ENCODE measurements at regions of chr17 and their contacts with region 1.

Region 1: DNA sequence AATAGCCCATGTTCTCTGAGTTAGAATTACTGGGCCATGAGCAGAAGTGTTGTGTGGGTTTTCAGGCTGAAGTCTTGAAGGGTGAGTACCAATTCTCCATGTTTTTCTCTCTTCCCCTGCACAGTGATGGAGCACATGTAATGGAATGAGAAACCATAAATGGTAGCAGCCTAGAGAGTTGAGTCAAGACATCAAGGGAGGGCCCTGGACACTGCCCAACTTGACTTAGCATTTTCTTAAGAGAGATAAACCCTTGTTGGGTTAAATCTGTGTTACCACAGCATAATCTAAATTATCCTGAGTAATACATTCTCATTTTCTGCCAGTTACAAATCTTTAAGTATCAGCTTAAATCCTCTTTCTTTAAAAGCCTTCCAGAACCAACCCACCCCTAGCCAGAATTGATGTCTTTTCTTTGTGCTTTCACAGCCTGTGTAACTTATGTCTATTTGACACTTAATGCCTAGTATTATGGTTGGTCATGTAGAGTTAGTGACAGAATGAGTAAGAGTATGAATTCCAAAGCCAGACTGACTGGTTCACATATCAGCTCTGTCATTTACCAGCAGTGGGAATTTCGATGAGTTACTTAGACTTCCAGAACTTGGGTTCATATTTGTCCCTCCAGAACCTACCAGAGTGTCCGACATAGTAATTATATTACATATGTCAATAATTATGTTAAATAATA is 27.0 kb upstream of the RGS9 start:
- DNase-seq: no peak
- H3K4me3 ChIP-seq: no peak overlapping the region
- CTCF ChIP-seq: no peak

Region 2: DNA sequence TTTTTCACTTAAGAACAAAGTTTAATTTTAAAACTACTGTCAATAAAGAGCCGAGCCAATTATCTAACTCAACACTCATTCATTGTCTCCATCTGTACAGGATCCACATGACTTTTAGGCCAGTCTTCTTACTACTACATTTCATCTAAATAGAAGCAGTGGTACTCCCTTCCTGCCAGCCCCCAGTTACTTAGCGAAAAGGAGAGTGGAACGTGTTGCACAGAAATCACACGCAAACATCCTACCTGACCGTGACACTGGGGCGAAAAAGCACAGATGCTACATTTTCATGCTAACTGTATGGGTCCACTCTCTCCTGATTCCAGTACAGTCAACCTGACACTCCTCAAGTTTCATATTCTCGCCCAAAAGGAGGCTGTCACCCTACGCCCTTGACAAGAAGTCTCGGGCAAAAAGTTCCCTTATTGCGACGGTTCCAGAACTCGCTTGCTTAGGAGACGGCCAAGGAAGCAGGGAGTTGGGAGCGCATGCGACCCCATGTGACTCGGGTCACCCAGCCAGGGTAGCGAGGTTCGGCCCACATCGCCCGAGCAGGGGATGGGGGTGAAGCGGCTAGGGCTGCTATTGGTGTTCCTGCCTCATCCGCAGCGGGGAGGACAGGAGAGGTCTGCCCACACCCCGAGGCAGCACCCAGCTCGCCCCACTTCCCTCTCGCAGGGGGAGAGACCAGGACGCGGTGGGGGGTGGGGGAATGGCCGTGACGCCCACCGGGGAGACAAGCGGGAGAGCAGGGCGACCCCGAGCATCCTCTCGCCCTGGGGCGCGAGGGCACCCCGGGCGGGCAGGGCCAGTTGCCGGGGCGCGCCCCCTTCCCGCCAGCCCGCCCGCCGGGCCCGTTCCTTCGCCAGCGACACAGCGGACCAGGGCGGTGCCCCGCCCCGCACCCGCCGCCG is 54.5 kb before region 1 on chr17:
- in situ Hi-C with region 1: no loop called
- DNase-seq: no peak
- H3K4me3 ChIP-seq: peak overlapping the region; percentile 93
- CTCF ChIP-seq: no peak

Region 3: DNA sequence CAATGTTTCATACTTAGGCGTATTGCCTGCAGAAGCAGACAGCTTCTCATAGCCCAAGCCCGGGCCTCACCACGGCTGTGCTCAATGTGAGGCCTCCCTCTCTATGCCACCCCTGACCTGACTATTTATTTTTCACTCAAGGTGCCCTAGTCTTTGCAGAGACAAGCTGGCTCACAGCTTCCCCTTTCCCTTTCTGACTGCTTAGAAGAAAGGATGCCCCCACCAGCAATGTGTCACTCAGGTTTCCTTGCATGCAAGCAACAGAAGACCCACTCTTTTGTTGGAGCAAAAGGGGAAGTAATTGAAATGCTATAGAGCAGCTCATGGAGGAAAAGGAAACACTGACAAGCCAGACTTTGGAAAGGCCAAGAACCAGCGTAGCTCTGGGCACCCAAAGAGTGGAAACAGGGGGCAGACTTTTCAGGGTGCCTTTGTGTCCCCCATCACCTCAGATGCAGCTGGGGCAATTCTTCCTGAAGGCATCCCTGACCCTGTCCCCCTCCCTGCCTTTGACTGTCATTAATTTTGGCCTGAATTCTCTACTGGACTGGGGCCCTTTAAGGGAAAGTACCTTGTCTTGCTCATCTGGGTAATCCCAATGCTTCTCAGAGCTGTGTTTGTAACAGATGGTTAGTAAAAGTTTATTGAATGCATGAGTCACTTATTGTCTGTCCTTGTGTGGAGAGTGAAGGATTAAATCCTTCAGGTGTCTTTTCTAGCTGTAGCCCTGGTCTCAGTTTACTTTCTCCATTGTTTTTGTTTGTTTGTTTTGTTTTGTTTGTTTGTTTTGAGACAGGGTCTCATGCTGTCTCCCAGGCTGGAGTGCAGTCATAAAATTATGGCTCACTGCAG is 44.9 kb after region 1 on chr17:
- in situ Hi-C with region 1: loop called (anchors 5 kb)
- DNase-seq: no peak
- H3K4me3 ChIP-seq: no peak overlapping the region
- CTCF ChIP-seq: no peak

Region 4: DNA sequence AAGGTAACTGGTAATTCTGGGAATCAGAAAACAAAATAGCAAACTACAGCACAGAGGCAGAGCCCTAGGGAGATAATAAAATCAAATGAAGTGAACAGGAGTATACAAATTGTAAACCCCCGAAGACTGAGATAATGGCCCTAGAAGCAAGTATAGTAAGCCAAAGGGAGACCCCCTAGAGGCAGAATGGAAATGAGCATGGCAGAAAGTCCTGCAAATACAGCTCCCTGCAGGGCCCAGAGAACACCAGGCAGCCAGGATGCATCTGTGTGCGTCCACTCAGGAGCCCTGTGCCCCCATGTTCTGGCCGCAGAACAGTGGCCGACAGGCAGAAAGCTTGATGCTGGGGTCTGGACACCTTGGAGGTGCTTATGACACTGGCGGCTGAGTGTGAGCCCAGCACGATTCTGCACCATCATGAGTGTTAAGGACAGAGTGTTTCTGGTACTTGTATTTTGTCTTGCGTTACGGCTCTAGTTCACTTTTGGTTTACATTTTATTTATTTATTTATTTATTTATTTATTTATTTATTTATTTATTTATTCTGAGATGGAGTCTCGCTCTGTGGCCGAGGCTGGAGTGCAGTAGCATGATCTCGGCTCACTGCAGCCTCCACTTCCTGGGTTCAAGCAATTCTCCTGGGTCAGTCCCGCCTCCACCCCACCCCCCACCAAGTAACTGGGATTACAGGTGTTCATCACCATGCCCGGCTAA is 75.7 kb after region 1 on chr17:
- in situ Hi-C with region 1: loop called (anchors 5 kb)
- DNase-seq: no peak
- H3K4me3 ChIP-seq: no peak overlapping the region
- CTCF ChIP-seq: no peak

Measured in astrocyte of the cerebellum (primary cell).